ENCODE measurements at regions of chr11 and their contacts with region 1.

Region 1: DNA sequence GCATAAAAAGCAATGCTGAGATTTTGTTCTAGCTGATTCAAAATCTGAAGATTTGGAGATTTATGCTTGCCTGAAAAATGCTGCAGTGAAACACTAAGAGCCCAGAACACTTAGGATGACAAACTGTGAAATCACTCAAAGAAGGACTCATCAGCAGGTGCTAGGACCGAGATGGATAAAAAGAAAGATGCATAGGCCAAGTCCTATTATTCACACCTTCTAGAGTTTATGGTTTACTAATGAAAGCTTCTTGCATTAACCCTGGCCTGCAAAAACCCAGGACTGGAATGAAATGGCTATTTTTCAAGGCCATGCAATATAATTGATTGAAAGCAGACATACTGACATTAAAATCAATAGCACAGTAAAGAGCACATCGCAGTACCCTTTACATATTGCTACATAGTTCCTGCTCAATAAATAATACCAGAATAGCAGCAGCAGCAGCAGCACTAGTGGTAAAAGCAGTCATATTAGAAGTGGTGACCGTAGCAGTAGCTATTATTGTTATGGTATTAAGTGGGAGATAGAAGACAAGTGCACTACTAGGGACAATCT is 161.7 kb downstream of the RAB38 start:
- DNase-seq: no peak
- ATAC-seq: no peak

Region 2: DNA sequence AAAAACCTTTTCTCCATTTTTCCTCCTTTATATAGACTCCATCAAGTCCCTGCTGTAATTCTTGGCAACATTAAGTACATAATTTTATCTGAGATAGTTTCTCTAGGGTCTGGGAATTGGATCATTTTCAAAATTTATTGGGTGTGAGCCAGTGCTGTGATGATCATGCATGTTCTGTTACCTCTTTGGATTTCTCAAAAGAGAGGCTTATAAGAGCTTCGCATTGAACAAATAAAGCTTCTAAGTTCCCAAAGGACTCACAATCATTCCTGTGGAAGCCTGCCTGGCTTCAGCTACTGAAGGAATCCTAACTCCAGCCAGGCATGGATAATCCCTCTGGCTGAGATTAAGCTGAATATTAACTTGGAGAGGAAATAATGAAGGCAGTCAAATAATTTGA is 46.9 kb before region 1 on chr11:
- intact Hi-C with region 1: loop called (anchors 2 kb)
- DNase-seq: no peak
- ATAC-seq: peak; percentile 57